ENCODE measurements at regions of chr17 and their contacts with region 1.

Region 1: DNA sequence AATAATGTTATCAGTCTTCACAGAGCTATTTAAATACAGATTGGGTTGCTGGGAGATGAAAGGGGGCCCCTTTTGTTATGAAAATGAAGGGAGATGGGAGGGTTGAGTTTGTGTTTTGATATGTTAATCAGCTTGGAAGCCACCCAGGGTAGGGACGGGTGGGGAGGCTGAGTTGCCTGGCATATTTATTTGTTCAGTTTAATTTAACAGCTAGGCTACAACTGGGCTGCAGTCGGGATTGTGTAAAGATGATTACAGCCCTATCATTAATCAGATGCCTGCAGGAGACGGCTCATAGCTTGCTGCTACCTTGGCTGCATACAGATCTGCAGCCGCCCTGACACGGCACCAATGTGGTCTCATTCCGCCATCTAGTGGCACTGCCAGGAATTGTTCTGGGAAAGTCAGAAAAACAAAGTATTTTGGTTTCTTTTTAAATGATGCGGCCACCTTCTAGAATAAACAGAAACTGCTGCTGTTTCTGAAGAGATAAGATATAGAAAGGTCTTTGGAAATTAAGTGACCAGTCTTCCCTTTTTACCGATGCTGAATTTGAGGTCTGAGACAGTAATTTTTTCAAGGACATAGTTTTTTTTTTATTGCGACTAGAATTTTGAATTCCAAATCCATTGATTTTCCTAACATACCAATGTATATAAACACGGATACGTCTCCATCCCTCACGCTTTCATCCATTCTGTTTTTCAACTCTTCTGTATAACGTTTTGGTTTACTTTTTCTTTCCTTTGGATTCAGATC is 458.0 kb upstream of the ASIC2 start:
- DNase-seq: peak; percentile 52
- H3K4me3 Mint-ChIP-seq: peak overlapping the region; percentile 47
- H3K27ac Mint-ChIP-seq: no peak overlapping the region
- H3K4me1 Mint-ChIP-seq: no peaks in the 10 kb centered on the region
- H3K27me3 Mint-ChIP-seq: no peaks in the 10 kb centered on the region
- CTCF ChIP-seq: peak; percentile 95

Region 2: DNA sequence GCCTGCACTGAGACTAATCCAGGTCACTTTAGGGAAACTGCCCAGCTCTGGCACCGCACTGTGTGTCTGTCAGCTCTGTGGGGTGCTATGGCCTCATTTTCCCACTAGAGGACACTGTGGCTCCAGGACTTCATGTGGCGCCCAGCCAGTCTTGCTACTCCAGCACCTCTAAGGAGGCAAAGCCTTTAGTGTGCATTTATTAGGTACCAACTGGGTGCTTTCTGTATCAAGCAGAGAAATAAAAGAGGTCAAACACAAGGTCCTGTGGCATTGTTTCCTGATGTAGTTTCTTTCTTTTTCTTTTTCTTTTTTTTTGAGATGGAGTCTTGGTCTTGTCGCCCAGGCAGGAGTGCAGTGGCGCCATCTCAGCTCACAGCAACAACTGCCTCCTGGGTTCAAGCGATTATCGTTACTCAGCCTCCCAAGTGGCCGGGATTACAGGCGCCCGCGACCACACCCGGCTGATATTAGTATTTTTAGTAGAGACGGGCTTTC is 1498.0 kb before region 1 on chr17:
- CTCF ChIA-PET with region 1: no interaction called
- POLR2A ChIA-PET with region 1: no interaction called
- intact Hi-C with region 1: loop called (anchors 10 kb)
- DNase-seq: peak; percentile 82
- H3K4me3 Mint-ChIP-seq: no peak overlapping the region
- H3K27ac Mint-ChIP-seq: no peak overlapping the region
- H3K4me1 Mint-ChIP-seq: no peaks in the 10 kb centered on the region
- H3K27me3 Mint-ChIP-seq: no peaks in the 10 kb centered on the region
- CTCF ChIP-seq: peak; percentile 92

Region 3: DNA sequence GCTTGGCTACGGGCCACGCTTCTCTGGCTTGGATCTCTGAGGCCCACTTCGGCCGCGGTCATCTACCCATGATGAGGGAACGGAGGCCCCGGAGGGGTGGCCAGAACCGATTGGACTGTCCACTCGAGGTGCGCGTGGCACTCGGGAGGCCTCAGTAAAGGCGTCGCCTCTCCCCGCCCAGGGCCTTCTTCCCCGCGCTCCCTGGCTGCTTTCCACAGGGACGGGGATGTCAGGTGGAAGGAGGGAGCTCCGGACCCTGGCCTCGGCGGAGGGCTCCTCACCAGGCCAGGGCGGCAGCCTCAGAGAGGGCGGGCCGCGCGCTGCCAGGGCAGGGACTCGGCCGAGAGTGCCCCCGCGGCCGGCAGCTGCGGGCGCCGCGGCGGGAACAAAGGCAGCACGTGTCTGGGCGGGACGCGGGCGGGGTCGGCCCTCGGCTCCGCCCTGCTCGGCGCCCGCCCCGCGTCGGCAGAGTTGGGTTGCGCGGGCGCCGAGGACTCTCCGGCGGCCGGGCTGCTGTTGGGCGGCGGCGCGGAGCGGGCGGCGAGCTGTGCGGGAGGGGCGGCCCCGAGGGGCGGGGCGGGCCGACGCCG is 1264.9 kb before region 1 on chr17:
- CTCF ChIA-PET with region 1: interaction called, 5 read pairs
- POLR2A ChIA-PET with region 1: no interaction called
- intact Hi-C with region 1: loop called (anchors 5 kb)
- DNase-seq: peak; percentile 75
- H3K4me3 Mint-ChIP-seq: peak overlapping the region; percentile 80
- H3K27ac Mint-ChIP-seq: no peak overlapping the region
- H3K4me1 Mint-ChIP-seq: peaks cover 20% of the 10 kb centered on the region
- H3K27me3 Mint-ChIP-seq: no peaks in the 10 kb centered on the region
- CTCF ChIP-seq: no peak

Region 4: DNA sequence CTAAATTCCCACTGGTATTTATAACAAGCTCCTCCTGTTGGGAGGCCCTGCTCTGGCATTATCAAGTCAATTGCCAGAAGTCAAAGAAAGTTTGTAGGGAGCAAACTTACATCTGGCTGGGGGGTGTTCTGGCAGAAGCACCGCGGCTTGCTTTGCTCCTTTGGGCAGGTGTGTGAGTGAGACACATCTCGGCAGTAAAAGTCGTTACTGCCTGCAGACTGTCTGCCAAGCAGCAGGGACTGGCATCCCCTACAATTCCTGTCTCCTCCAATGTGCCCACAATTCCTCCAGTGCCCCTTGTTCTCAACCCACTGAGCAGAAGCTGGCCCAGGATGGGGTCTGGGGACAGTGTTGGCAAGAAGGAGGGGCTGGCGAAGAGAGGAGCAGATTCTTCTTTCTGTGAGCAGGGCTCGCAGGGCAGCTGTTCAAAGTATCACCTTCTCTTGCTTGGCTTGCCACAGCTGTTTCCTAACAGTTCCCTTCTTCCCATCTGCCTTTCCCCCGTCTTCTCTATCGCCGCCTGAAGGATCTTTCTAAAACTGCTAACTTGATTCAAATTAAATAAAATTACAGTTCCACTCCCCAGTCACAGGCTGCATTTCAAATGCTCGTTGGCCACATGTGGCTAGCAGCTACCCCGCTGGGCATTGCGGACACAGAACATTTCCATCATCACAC is 729.3 kb before region 1 on chr17:
- CTCF ChIA-PET with region 1: no interaction called
- POLR2A ChIA-PET with region 1: no interaction called
- intact Hi-C with region 1: loop called (anchors 10 kb)
- DNase-seq: no peak
- H3K4me3 Mint-ChIP-seq: no peak overlapping the region
- H3K27ac Mint-ChIP-seq: no peak overlapping the region
- H3K4me1 Mint-ChIP-seq: peaks cover 1% of the 10 kb centered on the region
- H3K27me3 Mint-ChIP-seq: no peaks in the 10 kb centered on the region
- CTCF ChIP-seq: no peak

Region 5: DNA sequence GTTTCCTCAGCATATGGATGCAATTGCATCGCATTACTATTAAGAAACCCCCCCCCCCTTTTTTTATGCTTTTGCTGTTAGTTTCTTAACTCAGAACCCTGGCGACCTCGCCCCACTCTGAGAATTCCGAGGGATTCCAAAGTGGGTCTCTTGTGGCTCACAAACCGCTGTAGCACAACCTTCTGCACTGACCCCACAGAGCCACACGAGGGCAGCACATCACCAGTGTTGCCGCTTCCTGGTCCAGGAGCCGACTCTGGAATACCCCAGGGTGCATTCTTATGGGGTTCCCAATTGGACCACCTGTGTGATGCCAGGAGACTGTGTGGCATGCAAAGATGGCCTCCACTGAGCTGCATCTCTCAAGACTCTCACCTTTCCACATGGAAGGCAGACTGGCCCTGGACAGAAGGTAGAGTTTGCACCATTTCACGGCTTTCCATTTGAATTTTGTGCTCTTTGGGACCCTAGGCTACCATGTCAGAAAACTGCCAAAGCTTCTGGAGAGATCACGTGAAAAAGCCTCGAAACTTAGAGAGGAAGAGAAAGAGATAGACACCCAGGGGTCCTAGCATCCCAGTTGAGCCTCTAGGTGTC is 25.3 kb before region 1 on chr17:
- CTCF ChIA-PET with region 1: interaction called, 17 read pairs
- POLR2A ChIA-PET with region 1: no interaction called
- intact Hi-C with region 1: no loop called
- DNase-seq: no peak
- H3K4me3 Mint-ChIP-seq: no peak overlapping the region
- H3K27ac Mint-ChIP-seq: no peak overlapping the region
- H3K4me1 Mint-ChIP-seq: no peaks in the 10 kb centered on the region
- H3K27me3 Mint-ChIP-seq: no peaks in the 10 kb centered on the region
- CTCF ChIP-seq: no peak

Region 6: GRCh38 chr17:33739714-33740113 is 11.4 kb before region 1 on chr17:
- CTCF ChIA-PET with region 1: interaction called, 12 read pairs
- POLR2A ChIA-PET with region 1: no interaction called
- intact Hi-C with region 1: no loop called
- DNase-seq: no peak
- H3K4me3 Mint-ChIP-seq: no peak overlapping the region
- H3K27ac Mint-ChIP-seq: no peak overlapping the region
- H3K4me1 Mint-ChIP-seq: no peaks in the 10 kb centered on the region
- H3K27me3 Mint-ChIP-seq: no peaks in the 10 kb centered on the region
- CTCF ChIP-seq: no peak

Region 7: GRCh38 chr17:33892717-33893591 is 141.8 kb after region 1 on chr17:
- CTCF ChIA-PET with region 1: no interaction called
- POLR2A ChIA-PET with region 1: no interaction called
- intact Hi-C with region 1: no loop called
- DNase-seq: no peak
- H3K4me3 Mint-ChIP-seq: no peak overlapping the region
- H3K27ac Mint-ChIP-seq: no peak overlapping the region
- H3K4me1 Mint-ChIP-seq: no peaks in the 10 kb centered on the region
- H3K27me3 Mint-ChIP-seq: no peaks in the 10 kb centered on the region
- CTCF ChIP-seq: no peak